Heart right ventricle (tissue), 16 donors: ENCODE measurements at regions of chr2 and their contacts with region 1.

Region 1: GRCh38 chr2:182980115-182980514 is 58.1 kb downstream of the NCKAP1 start:
- DNase-seq: no peak
- ATAC-seq: peak in 4 of 8 donors; percentile 47 to 75 (median 57)
- H3K4me3 ChIP-seq: no peak overlapping the region
- H3K27ac ChIP-seq: no peak overlapping the region
- H3K4me1 ChIP-seq: peaks cover 0 to 13% (median 0%) of the 10 kb centered on the region in 9 donors
- H3K27me3 ChIP-seq: no peaks in the 10 kb centered on the region
- CTCF ChIP-seq: peak; percentile 46 to 83 (median 66)

Region 2: GRCh38 chr2:182763311-182763912 is 216.7 kb before region 1 on chr2:
- intact Hi-C with region 1: loop called in 8 of 10 experiments (anchors 5 to 10 kb)
- DNase-seq: peak in 1 of 2 donors; percentile 15
- ATAC-seq: peak in 5 of 8 donors; percentile 55 to 68 (median 57)
- H3K4me3 ChIP-seq: no peak overlapping the region
- H3K27ac ChIP-seq: peak overlapping the region in 2 of 10 donors; percentile 33 to 34
- H3K4me1 ChIP-seq: peaks cover 0 to 36% (median 12%) of the 10 kb centered on the region in 9 donors
- H3K27me3 ChIP-seq: no peaks in the 10 kb centered on the region
- CTCF ChIP-seq: peak; percentile 15 to 65 (median 58)

Region 3: GRCh38 chr2:182784777-182785176 is 195.3 kb before region 1 on chr2:
- intact Hi-C with region 1: loop called in 6 of 10 experiments (anchors 5 to 10 kb)
- DNase-seq: no peak
- ATAC-seq: no peak
- H3K4me3 ChIP-seq: no peak overlapping the region
- H3K27ac ChIP-seq: no peak overlapping the region
- H3K4me1 ChIP-seq: peaks cover 0 to 6% (median 0%) of the 10 kb centered on the region in 9 donors
- H3K27me3 ChIP-seq: no peaks in the 10 kb centered on the region
- CTCF ChIP-seq: peak; percentile 14 to 73 (median 54)

Region 4: GRCh38 chr2:182915369-182916326 is 64.5 kb before region 1 on chr2:
- intact Hi-C with region 1: loop called in 1 of 10 experiments (anchors 10 kb)
- DNase-seq: no peak
- ATAC-seq: peak; percentile 34 to 81 (median 70)
- H3K4me3 ChIP-seq: no peak overlapping the region
- H3K27ac ChIP-seq: peak overlapping the region in 4 of 10 donors; percentile 13 to 27 (median 22)
- H3K4me1 ChIP-seq: peaks cover 0 to 12% (median 0%) of the 10 kb centered on the region in 9 donors
- H3K27me3 ChIP-seq: no peaks in the 10 kb centered on the region
- CTCF ChIP-seq: no peak

Region 5: DNA sequence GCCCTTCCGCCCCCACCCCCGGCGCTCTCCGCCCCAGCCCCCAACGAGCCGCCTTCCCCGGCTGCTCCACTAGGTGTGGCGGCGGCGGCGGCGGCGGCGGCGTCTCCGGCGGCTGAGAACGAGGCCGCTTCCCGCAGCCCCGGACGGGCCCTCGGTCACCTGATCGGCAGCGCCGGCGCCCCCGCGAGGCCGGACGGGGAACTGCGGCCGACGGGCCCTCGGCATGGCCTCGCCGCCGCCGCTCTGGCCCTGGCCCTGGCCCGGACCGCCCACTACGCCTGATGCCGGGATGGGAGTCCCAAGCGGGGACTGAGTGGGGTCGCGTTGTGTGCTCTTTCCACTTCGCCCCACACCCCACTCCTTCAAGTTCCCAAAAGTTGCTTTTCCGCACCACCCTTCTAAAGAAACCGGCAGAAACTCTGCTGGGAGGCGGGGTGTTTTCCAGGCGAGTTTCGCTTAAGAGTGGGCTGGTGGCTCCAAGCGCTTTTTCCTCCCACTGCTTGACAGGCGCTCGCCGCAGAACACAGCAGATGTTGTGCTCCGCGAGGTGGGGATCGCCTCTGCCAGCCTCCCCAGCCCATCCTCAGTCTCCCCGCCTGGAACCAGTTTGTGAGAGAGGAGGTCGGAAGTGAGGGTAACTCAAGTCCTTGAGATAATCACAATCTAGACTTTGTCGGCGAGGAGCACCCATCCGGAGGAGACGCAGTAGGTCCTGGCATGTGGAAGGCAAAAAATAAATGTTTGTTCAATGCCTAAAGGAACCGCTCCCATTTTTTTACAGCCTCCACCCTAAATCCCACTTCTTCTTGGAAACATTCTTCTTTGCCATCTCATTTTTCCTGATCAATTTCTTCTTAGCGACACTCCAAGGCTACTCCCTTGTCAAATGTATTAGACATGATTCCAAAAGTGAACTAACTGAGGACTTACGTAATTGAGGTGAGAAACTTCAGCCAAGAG is 58.5 kb after region 1 on chr2 and contains the start of gene NCKAP1:
- intact Hi-C with region 1: loop called in 3 of 10 experiments (anchors 5 to 10 kb)
- DNase-seq: peak; percentile 91 to 95
- ATAC-seq: peak; percentile 92 to 96 (median 94)
- H3K4me3 ChIP-seq: peak within 1 kb of the TSS; percentile 69 to 88 (median 83)
- H3K27ac ChIP-seq: peak within 1 kb of the TSS; percentile 95 to 100 (median 99)
- H3K4me1 ChIP-seq: peaks cover 0 to 49% (median 37%) of the 10 kb centered on the region in 9 donors
- H3K27me3 ChIP-seq: peaks cover 0 to 93% (median 0%) of the 10 kb centered on the region in 7 donors
- CTCF ChIP-seq: peak; percentile 81 to 99 (median 93)
- total RNA-seq, gene NCKAP1: 118 to 153 (median 130) TPM